ENCODE measurements at regions of chr20 and their contacts with region 1.

Region 1: DNA sequence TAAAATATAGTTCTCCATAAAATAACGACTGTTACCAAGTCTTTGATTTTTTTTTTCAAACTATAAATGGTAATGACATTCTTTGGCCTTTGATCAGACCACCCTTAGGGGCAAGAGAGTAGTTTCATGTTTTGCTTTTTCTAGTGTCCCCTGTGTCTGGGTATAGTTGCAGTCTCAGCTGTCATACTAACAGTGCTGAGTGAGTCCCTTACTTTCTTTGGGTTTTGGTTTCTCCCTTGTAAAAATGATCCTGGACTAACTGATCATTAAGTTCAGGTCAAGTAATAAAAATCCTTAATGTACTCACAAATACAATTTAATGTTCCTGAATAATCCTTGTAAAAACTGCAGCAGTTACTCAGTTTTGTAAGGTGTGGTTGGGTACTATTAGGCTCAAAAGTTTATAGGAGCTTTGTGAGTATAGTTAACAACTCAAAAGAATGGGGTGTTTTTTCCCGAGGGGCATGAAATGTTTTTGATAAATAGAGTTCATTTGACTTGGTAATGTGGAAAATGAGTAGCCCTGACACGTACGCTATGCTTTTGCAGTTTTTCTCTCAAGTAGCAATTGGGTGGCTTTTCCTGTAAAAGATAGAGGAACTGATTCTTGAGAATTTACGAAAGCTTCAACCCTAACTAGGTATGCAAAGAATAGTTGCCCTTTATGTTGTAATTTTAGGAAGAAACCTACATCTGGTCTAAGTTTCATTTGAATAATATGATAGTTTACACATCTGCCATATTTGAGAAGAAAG is 6.2 kb downstream of the PTPN1 start:
- DNase-seq: no peak
- H3K4me3 Mint-ChIP-seq: peak overlapping the region; percentile 59
- H3K27ac Mint-ChIP-seq: peak overlapping the region; percentile 97
- H3K4me1 Mint-ChIP-seq: peaks cover 84% of the 10 kb centered on the region
- H3K27me3 Mint-ChIP-seq: no peaks in the 10 kb centered on the region

Region 2: GRCh38 chr20:50484276-50484976 is 31.9 kb before region 1 on chr20:
- CTCF ChIA-PET with region 1: interaction called, 17 read pairs
- intact Hi-C with region 1: loop called (anchors 2 kb)
- DNase-seq: no peak
- H3K4me3 Mint-ChIP-seq: peak overlapping the region; percentile 81
- H3K27ac Mint-ChIP-seq: peak overlapping the region; percentile 90
- H3K4me1 Mint-ChIP-seq: peaks cover 28% of the 10 kb centered on the region
- H3K27me3 Mint-ChIP-seq: no peaks in the 10 kb centered on the region

Region 3: DNA sequence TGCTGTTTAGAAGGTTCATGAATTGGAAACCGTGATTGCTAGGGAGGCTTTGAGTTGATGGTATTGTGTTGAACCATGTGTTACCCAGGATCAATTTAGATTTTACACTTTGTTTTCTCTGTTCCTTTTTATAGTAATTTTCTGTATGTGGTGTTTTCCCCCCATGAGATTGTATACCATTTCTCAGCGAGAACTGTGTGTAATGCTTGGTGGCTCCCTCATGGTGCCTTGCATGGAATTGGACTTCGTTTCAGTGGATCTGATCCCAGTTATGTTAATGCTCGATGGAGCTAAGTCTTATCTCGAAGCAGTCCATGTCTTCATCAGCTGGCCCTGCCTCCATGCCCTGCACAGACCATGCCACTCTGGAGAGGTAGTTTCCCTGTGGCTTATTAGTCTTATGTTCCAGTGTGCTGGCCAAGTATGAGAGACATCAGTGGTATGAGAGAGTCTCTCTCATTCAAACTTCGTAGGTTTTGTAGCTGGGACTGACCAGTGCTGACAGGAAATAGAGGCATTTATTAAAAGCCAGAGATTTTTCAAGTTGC is 12.5 kb after region 1 on chr20:
- CTCF ChIA-PET with region 1: interaction called, 3 read pairs
- intact Hi-C with region 1: loop called (anchors 1 kb)
- DNase-seq: peak; percentile 24
- H3K4me3 Mint-ChIP-seq: no peak overlapping the region
- H3K27ac Mint-ChIP-seq: no peak overlapping the region
- H3K4me1 Mint-ChIP-seq: peaks cover 31% of the 10 kb centered on the region
- H3K27me3 Mint-ChIP-seq: no peaks in the 10 kb centered on the region

Region 4: DNA sequence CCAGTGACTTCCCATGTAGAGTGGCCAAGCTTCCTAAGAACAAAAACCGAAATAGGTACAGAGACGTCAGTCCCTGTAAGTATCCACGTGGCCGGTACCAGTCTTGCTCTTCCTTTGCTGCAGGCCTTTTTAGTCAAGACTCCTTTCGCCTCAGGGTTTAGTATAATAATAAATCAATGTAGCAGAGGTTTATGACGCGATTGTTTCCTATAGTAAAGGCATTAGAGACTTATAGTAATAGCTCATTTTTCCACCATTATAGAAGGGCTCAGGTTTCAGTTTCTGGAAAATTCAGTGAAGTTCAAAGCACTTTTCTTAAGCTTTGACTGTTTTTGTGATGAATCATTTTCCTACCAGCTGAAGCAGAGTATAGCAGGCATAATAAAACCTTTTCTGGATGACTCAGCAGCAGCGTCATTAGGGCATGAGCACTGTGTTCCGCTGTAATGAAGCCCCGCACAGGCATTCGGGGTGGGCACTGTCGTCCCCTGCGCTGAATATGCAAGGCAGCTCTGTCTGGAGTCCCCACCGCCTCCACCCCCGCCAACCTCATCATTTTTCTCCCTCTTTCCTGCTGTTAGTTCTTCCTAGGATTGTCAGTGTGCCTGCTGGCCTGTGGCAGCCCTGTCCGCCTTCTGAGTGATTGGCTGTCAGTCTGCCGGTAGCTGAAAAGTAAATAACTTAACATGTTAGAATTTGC is 45.2 kb after region 1 on chr20:
- CTCF ChIA-PET with region 1: interaction called, 8 read pairs
- intact Hi-C with region 1: loop called (anchors 1 kb)
- DNase-seq: peak; percentile 85
- H3K4me3 Mint-ChIP-seq: peak overlapping the region; percentile 89
- H3K27ac Mint-ChIP-seq: peak overlapping the region; percentile 99
- H3K4me1 Mint-ChIP-seq: peaks cover 87% of the 10 kb centered on the region
- H3K27me3 Mint-ChIP-seq: no peaks in the 10 kb centered on the region

Region 5: GRCh38 chr20:50575847-50576720 is 59.7 kb after region 1 on chr20:
- CTCF ChIA-PET with region 1: interaction called, 51 read pairs
- intact Hi-C with region 1: no loop called
- DNase-seq: peak; percentile 80
- H3K4me3 Mint-ChIP-seq: no peak overlapping the region
- H3K27ac Mint-ChIP-seq: peak overlapping the region; percentile 54
- H3K4me1 Mint-ChIP-seq: peaks cover 41% of the 10 kb centered on the region
- H3K27me3 Mint-ChIP-seq: no peaks in the 10 kb centered on the region

Measured in activated naive CD4-positive, alpha-beta T cell treated with anti-CD3 and anti-CD28 coated beads for 36 hours (primary cell).